ENCODE measurements at regions of chr4 and their contacts with region 1.

Region 1: GRCh38 chr4:74444891-74445642 is at the start of gene AREG:
- DNase-seq: no peak
- H3K4me3 ChIP-seq: peak within 1 kb of the TSS; percentile 55
- H3K27me3 ChIP-seq: peaks cover 1% of the 10 kb centered on the region; the same call in 1 of the 2 replicates
- CTCF ChIP-seq: peak; percentile 79
- polyA plus RNA-seq, gene AREG: 0.07 and 0.33 TPM in 2 replicates

Region 2: DNA sequence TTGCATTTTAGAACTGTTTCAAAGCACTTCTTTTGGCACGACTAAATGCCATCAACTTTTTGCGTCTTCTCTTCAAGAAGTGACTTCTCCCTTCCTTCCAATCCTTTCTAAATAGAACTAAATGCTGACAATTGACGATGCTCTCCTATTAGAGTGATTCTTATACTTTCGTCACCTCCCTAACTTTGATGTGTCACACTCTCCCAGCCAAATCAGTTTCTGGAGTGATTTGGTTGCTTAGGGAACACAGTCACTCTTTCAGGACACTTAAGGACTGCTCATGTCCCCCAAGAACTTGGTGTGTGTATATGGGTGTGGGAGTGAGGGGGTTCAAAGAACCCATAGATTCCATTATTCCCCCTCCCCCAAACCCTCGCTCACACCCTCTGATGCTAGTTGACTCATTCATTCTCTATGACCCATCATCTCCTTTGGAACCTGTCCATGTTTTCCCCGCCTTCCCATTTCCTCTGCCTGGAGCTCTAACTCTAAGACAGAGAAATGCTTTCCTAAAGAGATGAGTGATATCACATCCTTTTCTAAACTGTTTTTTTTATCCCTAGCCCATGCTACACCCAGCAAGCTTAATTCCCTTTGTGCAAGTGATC is 26.9 kb before region 1 on chr4:
- CTCF ChIA-PET with region 1: no interaction called
- POLR2A ChIA-PET with region 1: no interaction called
- DNase-seq: peak; percentile 43
- H3K4me3 ChIP-seq: no peak overlapping the region
- H3K27me3 ChIP-seq: no peaks in the 10 kb centered on the region
- CTCF ChIP-seq: no peak

Region 3: DNA sequence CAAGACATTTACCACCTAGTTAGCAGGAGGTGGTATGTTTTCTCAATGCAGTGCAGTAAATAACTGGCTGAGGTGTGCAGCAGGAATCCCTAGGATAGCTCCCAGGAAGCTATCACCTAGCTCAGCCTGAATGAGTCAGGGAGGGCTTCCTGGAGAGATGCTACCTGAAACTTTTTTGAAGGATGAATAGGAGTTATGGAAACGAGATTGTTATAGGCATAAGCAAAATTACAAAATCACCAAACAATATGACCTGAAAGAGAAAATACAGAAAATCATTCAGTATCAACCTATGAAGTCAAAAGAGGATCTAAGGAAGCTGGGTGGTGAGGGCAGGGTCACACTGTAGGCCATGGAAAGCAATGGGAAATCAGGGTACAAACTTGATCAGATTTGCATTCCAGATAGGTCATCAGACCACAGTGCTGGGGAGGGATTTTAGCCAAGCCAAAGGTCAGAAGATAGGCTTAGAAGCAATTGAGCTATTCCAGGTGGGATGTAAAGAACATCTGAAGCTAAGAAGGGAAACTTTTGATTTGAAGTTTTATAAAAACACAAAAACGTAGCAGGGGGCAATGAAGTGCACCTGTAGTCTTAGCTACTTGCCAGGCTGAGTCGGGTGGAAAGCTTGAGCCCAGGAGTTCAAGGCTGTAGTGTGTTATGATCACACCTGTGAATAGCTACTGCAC is 11.1 kb after region 1 on chr4:
- CTCF ChIA-PET with region 1: interaction called, 10 read pairs
- POLR2A ChIA-PET with region 1: no interaction called
- DNase-seq: no peak
- H3K4me3 ChIP-seq: no peak overlapping the region
- H3K27me3 ChIP-seq: no peaks in the 10 kb centered on the region
- CTCF ChIP-seq: no peak

Measured in BJ (cell line).